ENCODE measurements at regions of chr10 and their contacts with region 1.

Region 1: DNA sequence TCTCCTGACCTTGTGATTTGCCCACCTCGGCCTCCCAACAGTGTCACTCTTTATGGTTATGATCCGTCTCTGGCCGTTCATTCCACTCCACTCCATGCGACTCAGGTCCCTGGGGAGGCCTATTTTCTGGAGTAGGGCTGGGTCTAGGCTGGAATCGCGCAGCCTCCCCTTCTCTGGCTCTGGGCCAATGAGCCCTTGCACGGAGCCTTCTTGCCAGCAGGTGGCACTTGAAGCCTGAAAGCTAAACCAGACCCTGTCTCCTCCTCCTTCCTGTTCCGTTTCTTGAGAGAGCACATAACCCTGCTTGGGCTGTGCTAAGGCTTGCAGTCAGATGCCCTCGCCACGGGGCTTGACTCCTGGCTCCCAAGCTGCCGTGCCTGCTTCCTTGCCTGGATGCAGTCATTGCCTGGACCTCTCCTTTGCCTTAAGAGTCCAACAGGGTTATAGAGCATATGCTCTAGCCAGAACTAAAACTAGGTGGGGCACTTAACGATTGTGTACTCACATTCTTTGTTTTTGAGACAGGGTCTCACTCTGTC is 9.6 kb upstream of the DNAJB12 start:
- DNase-seq: peak; percentile 69 to 97 (median 80)

Region 2: DNA sequence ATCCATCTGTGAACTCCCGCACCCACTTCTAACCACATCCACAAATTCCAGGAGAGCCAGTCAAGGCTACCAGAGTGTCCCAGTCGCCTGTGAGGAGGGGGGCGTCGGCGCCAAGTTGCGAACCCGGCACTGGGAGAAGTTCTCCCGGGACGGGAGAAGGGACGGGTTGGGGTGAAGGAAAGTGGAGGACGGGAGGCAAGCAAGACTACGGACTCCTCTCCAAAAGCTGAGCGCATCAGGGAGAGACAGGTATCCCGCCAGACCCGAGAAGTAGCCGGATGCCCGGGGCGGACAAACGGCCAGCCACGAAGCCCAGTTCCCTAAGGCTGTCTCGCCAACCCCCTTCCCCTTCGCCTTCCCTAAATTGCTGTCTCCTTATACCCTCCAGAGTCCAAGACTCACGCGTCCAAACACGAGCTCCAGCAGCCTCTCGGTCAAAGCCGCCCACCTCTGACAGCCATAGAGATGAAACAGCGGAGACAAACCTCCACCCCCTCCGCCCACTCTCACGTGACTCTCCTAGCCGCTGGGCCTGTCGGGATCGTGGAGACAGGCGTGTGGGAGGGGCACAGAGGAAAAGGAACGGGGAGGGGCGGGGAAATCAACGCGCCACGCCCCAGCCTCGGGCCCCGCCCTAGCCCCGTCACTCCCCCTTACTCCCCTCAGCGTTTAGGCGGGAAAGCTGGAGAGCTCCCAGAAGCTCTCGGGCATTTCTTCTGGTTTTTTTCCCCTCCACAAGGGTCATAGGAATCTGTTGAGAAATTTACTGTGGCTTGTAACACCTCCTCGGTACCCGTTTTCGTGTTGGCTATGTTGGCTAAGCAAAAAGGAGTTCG is 261.5 kb after region 1 on chr10 and contains the start of gene MICU1:
- intact Hi-C with region 1: loop called (anchors 10 kb)
- DNase-seq: peak; percentile 92 to 99 (median 96)

Region 3: DNA sequence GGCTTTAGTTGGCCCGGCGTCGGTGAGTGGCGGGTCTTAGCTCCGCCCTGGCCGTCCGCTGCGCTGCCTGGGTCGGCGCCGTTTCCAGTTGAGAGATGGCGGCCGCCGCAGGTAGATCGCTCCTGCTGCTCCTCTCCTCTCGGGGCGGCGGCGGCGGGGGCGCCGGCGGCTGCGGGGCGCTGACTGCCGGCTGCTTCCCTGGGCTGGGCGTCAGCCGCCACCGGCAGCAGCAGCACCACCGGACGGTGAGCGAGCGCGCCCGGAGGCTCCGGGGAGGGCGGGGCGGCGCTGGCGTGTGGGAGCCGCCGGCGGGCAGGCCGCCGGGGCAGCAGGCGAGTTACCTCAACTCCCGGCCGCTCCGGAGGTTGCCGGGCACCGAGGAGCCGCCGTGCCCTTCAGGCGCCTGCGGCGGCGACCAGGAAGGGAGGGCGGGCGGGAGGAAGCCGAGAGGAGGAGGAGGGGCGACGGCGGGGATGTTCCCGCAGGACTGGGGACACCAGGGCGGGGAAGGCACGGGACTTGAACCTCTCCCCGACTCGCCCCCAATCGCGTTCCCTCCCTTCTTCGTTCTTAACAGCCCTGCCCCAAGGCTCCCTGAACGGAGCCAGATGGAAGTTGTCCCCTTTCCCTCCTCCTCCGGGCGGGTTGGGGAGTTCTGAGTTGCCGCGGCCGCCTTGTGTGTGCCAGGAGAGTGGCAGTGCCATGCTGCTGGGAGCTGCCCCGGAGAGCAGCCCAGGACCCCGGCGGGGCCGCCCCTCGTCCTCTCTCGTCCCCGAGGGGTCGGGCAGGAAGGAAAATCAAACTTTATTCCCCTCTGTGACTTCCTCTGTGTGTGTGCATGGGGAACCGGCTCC is 328.0 kb after region 1 on chr10 and contains the start of gene MCU:
- intact Hi-C with region 1: loop called (anchors 10 kb)
- DNase-seq: peak; percentile 92 to 99 (median 96)

Region 4: GRCh38 chr10:72834183-72834825 is 470.0 kb after region 1 on chr10:
- intact Hi-C with region 1: loop called (anchors 1 kb)
- DNase-seq: peak in 6 of 10 donors; percentile 9 to 84 (median 28)

Region 5: DNA sequence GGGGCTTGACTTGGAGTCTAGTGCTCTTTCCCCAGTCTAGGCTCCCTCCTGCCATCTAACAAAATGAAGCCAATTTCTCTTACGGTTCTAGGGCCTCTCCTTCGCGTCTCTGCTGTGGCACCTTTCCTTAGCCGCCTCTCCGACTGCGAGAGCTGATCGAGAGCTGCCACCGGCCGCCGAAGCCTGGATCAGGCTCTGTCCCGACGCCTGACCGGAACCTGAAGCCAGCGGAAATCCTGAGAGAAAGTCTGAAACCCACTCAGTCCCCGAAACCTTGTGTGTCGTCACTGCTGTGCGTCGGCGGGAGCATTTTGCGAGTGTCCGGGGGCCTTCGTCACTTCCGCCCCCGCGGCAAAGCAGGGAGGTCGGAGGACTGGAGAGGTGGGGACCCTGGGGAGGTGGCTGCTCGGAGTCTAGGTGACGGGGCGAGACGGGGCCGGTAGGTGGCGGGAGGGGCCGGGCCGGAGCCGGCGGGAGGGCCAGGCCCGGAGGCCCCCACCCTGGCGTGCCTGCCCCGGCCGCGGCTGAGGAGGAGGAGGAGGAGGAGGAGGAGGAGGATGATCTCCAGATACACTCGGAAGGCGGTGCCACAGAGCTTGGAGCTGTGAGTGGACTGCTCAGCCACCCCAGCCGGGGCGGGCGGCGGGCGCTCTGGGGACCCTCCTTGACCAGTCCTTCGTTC is 803.6 kb after region 1 on chr10 and contains the starts of genes ECD and FAM149B1:
- intact Hi-C with region 1: loop called (anchors 10 kb)
- DNase-seq: peak; percentile 87 to 99 (median 94)